GM12878 (cell line): ENCODE measurements at regions of chr18 and their contacts with region 1.

Region 1: GRCh38 chr18:9869715-9870430 is 15.9 kb upstream of the TXNDC2 start:
- DNase-seq: peak; percentile 30
- ATAC-seq: peak; percentile 73
- H3K4me3 ChIP-seq: no peak overlapping the region
- H3K27ac ChIP-seq: no peak overlapping the region
- H3K4me1 ChIP-seq: peaks cover 11% of the 10 kb centered on the region
- H3K27me3 ChIP-seq: no peaks in the 10 kb centered on the region
- CTCF ChIP-seq: no peak
- EP300 ChIP-seq: no peak
- POLR2A ChIP-seq: no peak
- RAD21 ChIP-seq: no peak

Region 2: DNA sequence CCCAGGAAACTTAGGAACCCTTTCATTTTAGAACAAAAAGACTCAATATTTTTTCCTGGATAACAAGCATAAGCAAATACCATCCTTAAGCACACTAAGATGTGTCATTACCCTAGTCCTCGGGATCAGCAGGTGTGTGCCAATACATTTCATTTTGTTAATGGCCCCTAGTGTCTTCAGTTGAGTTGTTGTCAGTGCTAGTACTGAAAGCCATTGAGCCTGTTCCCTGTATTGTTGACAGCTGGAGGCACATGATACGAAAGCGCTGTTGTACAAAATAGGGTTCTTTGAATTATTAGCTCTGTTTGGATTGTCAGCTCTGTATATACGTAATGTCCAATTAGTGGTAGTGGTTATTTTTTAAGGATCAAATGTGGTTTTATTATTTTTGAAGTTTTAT is 73.4 kb after region 1 on chr18:
- CTCF ChIA-PET with region 1: no interaction called
- POLR2A ChIA-PET with region 1: no interaction called
- RAD21 ChIA-PET with region 1: no interaction called
- SMC1A ChIA-PET with region 1: no interaction called
- in situ Hi-C with region 1: no loop called
- intact Hi-C with region 1: loop called (anchors 10 kb)
- DNase-seq: no peak
- ATAC-seq: no peak
- H3K4me3 ChIP-seq: no peak overlapping the region
- H3K27ac ChIP-seq: no peak overlapping the region
- H3K4me1 ChIP-seq: no peaks in the 10 kb centered on the region
- H3K27me3 ChIP-seq: no peaks in the 10 kb centered on the region
- CTCF ChIP-seq: no peak
- EP300 ChIP-seq: no peak
- POLR2A ChIP-seq: no peak
- RAD21 ChIP-seq: no peak